ENCODE measurements at regions of chr5 and their contacts with region 1.

Region 1: GRCh38 chr5:140575309-140575708 is 10.7 kb downstream of the SLC35A4 start:
- DNase-seq: peak; percentile 45
- H3K4me3 ChIP-seq: no peak overlapping the region
- H3K27ac ChIP-seq: no peak overlapping the region
- H3K4me1 ChIP-seq: no peaks in the 10 kb centered on the region
- H3K27me3 ChIP-seq: no peaks in the 10 kb centered on the region
- CTCF ChIP-seq: peak; percentile 45 to 76

Region 2: GRCh38 chr5:140591747-140592372 is 16.6 kb after region 1 on chr5:
- CTCF ChIA-PET with region 1: interaction called, 10 read pairs
- dilution Hi-C with region 1: no loop called
- in situ Hi-C with region 1: no loop called
- intact Hi-C with region 1: no loop called
- DNase-seq: peak; percentile 66
- H3K4me3 ChIP-seq: no peak overlapping the region
- H3K27ac ChIP-seq: no peak overlapping the region
- H3K4me1 ChIP-seq: peaks cover 32% of the 10 kb centered on the region
- H3K27me3 ChIP-seq: no peaks in the 10 kb centered on the region
- CTCF ChIP-seq: no peak

Region 3: GRCh38 chr5:140607031-140607430 is 31.7 kb after region 1 on chr5:
- CTCF ChIA-PET with region 1: no interaction called
- dilution Hi-C with region 1: no loop called
- in situ Hi-C with region 1: no loop called
- intact Hi-C with region 1: loop called (anchors 1 kb)
- DNase-seq: peak; percentile 32
- H3K4me3 ChIP-seq: no peak overlapping the region
- H3K27ac ChIP-seq: no peak overlapping the region
- H3K4me1 ChIP-seq: peaks cover 7% of the 10 kb centered on the region
- H3K27me3 ChIP-seq: no peaks in the 10 kb centered on the region
- CTCF ChIP-seq: no peak

Region 4: GRCh38 chr5:140632150-140633020 is 57.1 kb after region 1 on chr5:
- CTCF ChIA-PET with region 1: no interaction called
- dilution Hi-C with region 1: no loop called
- in situ Hi-C with region 1: loop called in 1 of 2 experiments (anchors 5 kb)
- intact Hi-C with region 1: loop called (anchors 1 kb)
- DNase-seq: peak; percentile 62
- H3K4me3 ChIP-seq: peak overlapping the region; percentile 4 to 44 (median 40)
- H3K27ac ChIP-seq: no peak overlapping the region
- H3K4me1 ChIP-seq: peaks cover 28% of the 10 kb centered on the region
- H3K27me3 ChIP-seq: no peaks in the 10 kb centered on the region
- CTCF ChIP-seq: peak in 1 of 2 donors; percentile 4

Region 5: GRCh38 chr5:140690941-140691924 is 115.9 kb after region 1 on chr5 and contains the starts of genes HARS1 and HARS2:
- CTCF ChIA-PET with region 1: no interaction called
- dilution Hi-C with region 1: no loop called
- in situ Hi-C with region 1: loop called in 1 of 2 experiments (anchors 10 kb)
- intact Hi-C with region 1: no loop called
- DNase-seq: peak; percentile 98
- H3K4me3 ChIP-seq: peak within 1 kb of the TSS; percentile 93 to 98 (median 95)
- H3K27ac ChIP-seq: peak within 1 kb of the TSS; percentile 66
- H3K4me1 ChIP-seq: peaks cover 4% of the 10 kb centered on the region
- H3K27me3 ChIP-seq: no peaks in the 10 kb centered on the region
- CTCF ChIP-seq: no peak
- total RNA-seq, gene HARS1: 60.3 to 104 TPM
- total RNA-seq, gene HARS2: 24.8 to 30.4 TPM